ENCODE measurements at regions of chr15 and their contacts with region 1.

Region 1: GRCh38 chr15:49145651-49146609 is 9.5 kb downstream of the COPS2 start:
- DNase-seq: peak; percentile 33
- H3K4me3 ChIP-seq: no peak overlapping the region; a peak in 1 of 4 replicates
- H3K27ac ChIP-seq: peak overlapping the region in 1 of 2 experiments; percentile 39; a peak in 1 of 4 replicates
- H3K4me1 ChIP-seq: peaks cover 6 to 7% of the 10 kb centered on the region in 2 experiments; a peak in 2 of 4 replicates
- H3K27me3 ChIP-seq: no peaks in the 10 kb centered on the region
- CTCF ChIP-seq: peak; percentile 92
- EP300 ChIP-seq: no peak
- RAD21 ChIP-seq: peak; percentile 77

Region 2: GRCh38 chr15:49046220-49047102 is 99.5 kb before region 1 on chr15 and contains the start of gene SECISBP2L:
- CTCF ChIA-PET with region 1: interaction called, 19 read pairs
- POLR2A ChIA-PET with region 1: no interaction called
- DNase-seq: peak; percentile 95
- H3K4me3 ChIP-seq: peak within 1 kb of the TSS; percentile 78 to 99
- H3K27ac ChIP-seq: peak within 1 kb of the TSS; percentile 75 to 82
- H3K4me1 ChIP-seq: peaks cover 7 to 9% of the 10 kb centered on the region in 2 experiments; a peak in 3 of 4 replicates
- H3K27me3 ChIP-seq: no peaks in the 10 kb centered on the region
- CTCF ChIP-seq: peak; percentile 47
- EP300 ChIP-seq: peak; percentile 52 to 70; a peak in 3 of 4 replicates
- RAD21 ChIP-seq: peak; percentile 42
- polyA plus RNA-seq, gene SECISBP2L: 6.0 and 7.7 TPM in 2 replicates

Region 3: DNA sequence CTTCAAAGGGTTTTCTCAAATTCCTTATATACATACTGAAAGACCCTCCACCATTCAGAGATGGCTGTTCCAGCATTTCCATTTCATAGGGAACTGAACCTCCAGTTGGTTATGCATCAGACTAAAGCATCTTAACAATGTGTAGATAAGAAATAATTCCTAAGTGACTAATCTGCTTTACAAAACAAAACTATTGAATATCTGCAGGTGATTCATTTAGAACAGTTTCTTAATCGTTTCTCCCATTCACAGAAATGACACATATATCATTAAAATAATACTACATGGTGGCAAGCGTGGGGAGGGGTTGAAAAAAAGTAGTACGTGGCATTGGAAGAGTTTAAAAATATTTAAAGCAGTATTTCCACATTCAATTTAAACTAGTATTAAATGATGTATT is 10.0 kb before region 1 on chr15:
- CTCF ChIA-PET with region 1: interaction called, 19 read pairs
- POLR2A ChIA-PET with region 1: no interaction called
- DNase-seq: no peak
- H3K4me3 ChIP-seq: no peak overlapping the region
- H3K27ac ChIP-seq: peak overlapping the region in 1 of 2 experiments; percentile 77; a peak in 2 of 4 replicates
- H3K4me1 ChIP-seq: peaks cover 0 to 40% of the 10 kb centered on the region in 2 experiments; a peak in 3 of 4 replicates
- H3K27me3 ChIP-seq: no peaks in the 10 kb centered on the region
- CTCF ChIP-seq: no peak
- EP300 ChIP-seq: peak in 1 of 2 experiments; percentile 53; a peak in 1 of 4 replicates
- RAD21 ChIP-seq: no peak

Region 4: DNA sequence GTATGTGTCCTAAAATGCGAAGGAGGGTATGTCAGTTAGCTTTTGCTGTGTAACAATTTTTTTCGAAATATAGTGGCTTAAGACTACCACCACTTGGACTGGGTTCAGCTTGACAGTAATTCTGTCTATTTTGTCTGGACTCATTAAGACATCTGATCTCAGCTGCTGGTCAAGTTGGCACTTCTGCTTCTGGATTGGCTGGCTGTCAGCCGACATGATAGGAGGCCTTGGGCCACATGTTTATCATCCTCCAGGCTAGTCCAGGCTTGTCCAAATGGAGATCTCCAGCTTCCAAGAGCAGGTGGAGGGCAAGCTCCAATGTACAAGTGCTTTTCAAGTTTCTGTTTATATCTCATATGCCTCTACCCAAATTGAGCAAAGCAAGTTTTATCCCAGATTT is 120.0 kb after region 1 on chr15:
- CTCF ChIA-PET with region 1: no interaction called
- POLR2A ChIA-PET with region 1: no interaction called
- DNase-seq: no peak
- H3K4me3 ChIP-seq: no peak overlapping the region
- H3K27ac ChIP-seq: no peak overlapping the region
- H3K4me1 ChIP-seq: no peaks in the 10 kb centered on the region
- H3K27me3 ChIP-seq: no peaks in the 10 kb centered on the region
- CTCF ChIP-seq: no peak
- EP300 ChIP-seq: no peak
- RAD21 ChIP-seq: no peak